ENCODE measurements at regions of chr22 and their contacts with region 1.

Region 1: GRCh38 chr22:20174785-20175596 is 24.1 kb upstream of the CCDC188 start:
- DNase-seq: no peak
- H3K4me3 ChIP-seq: no peak overlapping the region
- H3K27me3 ChIP-seq: peaks cover 3% of the 10 kb centered on the region
- CTCF ChIP-seq: peak; percentile 43

Region 2: DNA sequence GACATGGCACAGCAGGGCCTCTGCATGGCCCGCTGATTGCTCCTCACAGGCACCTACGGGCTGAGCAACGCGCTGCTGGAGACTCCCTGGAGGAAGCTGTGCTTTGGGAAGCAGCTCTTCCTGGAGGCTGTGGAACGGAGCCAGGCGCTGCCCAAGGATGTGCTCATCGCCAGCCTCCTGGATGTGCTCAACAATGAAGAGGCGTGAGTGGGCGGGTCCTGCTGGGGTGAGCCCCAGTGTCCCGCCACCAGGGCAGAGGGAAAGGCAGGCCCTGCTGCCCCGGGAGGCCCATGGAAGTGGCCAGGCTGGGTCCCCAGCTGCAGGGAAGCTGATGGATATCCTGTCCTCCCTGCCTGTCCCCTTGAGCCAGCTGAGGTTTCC is 113.5 kb before region 1 on chr22:
- CTCF ChIA-PET with region 1: no interaction called
- POLR2A ChIA-PET with region 1: no interaction called
- DNase-seq: no peak
- H3K4me3 ChIP-seq: no peak overlapping the region
- H3K27me3 ChIP-seq: no peaks in the 10 kb centered on the region
- CTCF ChIP-seq: no peak

Region 3: GRCh38 chr22:20238536-20238900 is 63.5 kb after region 1 on chr22:
- CTCF ChIA-PET with region 1: interaction called, 12 read pairs
- POLR2A ChIA-PET with region 1: no interaction called
- DNase-seq: no peak
- H3K4me3 ChIP-seq: no peak overlapping the region
- H3K27me3 ChIP-seq: 0 out of 2 replicates have a peak, but pooled peaks cover 2% of the 10 kb centered on the region
- CTCF ChIP-seq: peak; percentile 53

Measured in BJ (cell line).